HepG2 (cell line): ENCODE measurements at regions of chrX and their contacts with region 1.

Region 1: GRCh38 chrX:103686199-103687072 is at the start of gene MORF4L2:
- DNase-seq: peak; percentile 96
- ATAC-seq: peak; percentile 92
- H3K4me3 ChIP-seq: peak within 1 kb of the TSS; percentile 73 to 91 (median 78)
- H3K27ac ChIP-seq: peak within 1 kb of the TSS; percentile 99
- H3K4me1 ChIP-seq: peaks cover 39% of the 10 kb centered on the region
- H3K27me3 ChIP-seq: no peaks in the 10 kb centered on the region; a peak in 1 of 5 replicates
- CTCF ChIP-seq: no peak
- EP300 ChIP-seq: no peak; a peak in 1 of 4 replicates
- POLR2A ChIP-seq: peak; percentile 92 to 98
- RAD21 ChIP-seq: no peak
- total RNA-seq, gene MORF4L2: 469 and 687 TPM in 2 replicates

Region 2: GRCh38 chrX:103533511-103534216 is 152.8 kb before region 1 on chrX:
- CTCF ChIA-PET with region 1: no interaction called
- POLR2A ChIA-PET with region 1: no interaction called
- in situ Hi-C with region 1: no loop called
- intact Hi-C with region 1: loop called (anchors 5 kb)
- DNase-seq: peak; percentile 43
- ATAC-seq: peak; percentile 81
- H3K4me3 ChIP-seq: peak overlapping the region; percentile 2 to 65 (median 49); a peak in 5 of 6 replicates
- H3K27ac ChIP-seq: no peak overlapping the region
- H3K4me1 ChIP-seq: no peaks in the 10 kb centered on the region
- H3K27me3 ChIP-seq: no peaks in the 10 kb centered on the region
- CTCF ChIP-seq: peak; percentile 75
- EP300 ChIP-seq: no peak
- POLR2A ChIP-seq: no peak
- RAD21 ChIP-seq: 0 out of 2 replicates have a peak, but pooled peaks have one; percentile 18

Region 3: DNA sequence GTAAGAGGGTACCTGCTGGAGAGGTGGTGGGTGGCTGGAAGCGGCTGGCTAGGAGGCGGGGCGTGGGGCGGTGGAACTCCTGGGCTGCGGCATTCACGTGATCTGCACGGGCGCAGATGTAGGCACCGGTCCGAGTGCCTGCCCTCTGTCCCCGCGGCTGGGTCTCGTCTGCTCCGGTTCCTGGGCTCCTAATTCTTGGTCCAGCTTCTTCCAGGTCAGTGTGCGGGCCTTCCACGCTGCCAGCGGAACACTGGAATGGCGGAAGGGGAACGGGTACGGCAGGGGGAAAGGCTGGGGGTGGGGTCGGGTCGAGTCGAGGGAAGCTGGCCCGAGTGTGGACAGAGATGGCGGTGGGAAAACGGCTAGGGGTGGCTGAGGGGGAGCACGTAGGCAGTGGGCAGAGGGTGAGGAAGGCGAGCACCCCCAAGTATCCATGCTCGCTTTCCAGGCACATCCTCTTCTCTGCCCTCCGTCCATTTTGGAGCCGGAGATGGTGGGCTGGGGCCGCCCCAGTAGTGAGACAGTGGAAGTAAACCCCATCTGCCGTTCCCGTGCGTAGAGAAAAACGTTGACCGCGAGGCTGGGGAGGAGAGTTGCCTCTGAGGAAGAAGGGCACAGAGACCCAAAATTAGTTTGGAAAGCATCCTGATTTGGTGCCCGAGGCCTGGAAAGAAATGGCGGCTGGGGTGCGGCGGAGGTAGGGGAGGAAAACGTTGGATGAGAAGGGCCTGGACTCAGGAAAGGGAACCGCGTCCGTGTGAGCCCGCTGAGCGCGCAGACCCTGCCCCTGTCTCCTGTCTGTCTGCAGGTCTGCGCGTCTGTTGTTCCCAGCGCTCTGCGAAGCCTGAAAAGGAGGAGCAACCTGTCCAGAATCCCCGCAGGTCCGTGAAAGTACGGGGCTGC is 100.8 kb before region 1 on chrX and contains the start of gene TCEAL4:
- CTCF ChIA-PET with region 1: no interaction called
- POLR2A ChIA-PET with region 1: no interaction called
- in situ Hi-C with region 1: no loop called
- intact Hi-C with region 1: loop called (anchors 5 kb)
- DNase-seq: no peak
- ATAC-seq: peak; percentile 96
- H3K4me3 ChIP-seq: peak within 1 kb of the TSS; percentile 64 to 85 (median 81)
- H3K27ac ChIP-seq: peak within 1 kb of the TSS; percentile 43
- H3K4me1 ChIP-seq: 0 out of 2 replicates have a peak, but pooled peaks cover 7% of the 10 kb centered on the region
- H3K27me3 ChIP-seq: no peaks in the 10 kb centered on the region
- CTCF ChIP-seq: no peak
- EP300 ChIP-seq: no peak
- POLR2A ChIP-seq: peak; percentile 27 to 69; a peak in 2 of 4 replicates
- RAD21 ChIP-seq: no peak
- total RNA-seq, gene TCEAL4: 31.0 and 36.1 TPM in 2 replicates

Region 4: GRCh38 chrX:103629318-103630170 is 56.9 kb before region 1 on chrX:
- CTCF ChIA-PET with region 1: no interaction called
- POLR2A ChIA-PET with region 1: interaction called, 13 read pairs
- in situ Hi-C with region 1: no loop called
- intact Hi-C with region 1: loop called (anchors 5 kb)
- DNase-seq: peak; percentile 39
- ATAC-seq: peak; percentile 94
- H3K4me3 ChIP-seq: peak overlapping the region; percentile 67 to 78 (median 73)
- H3K27ac ChIP-seq: peak overlapping the region; percentile 86
- H3K4me1 ChIP-seq: peaks cover 7% of the 10 kb centered on the region; the same call in 1 of the 2 replicates
- H3K27me3 ChIP-seq: no peaks in the 10 kb centered on the region
- CTCF ChIP-seq: peak; percentile 67
- EP300 ChIP-seq: no peak
- POLR2A ChIP-seq: peak in 1 of 2 experiments; percentile 74; a peak in 2 of 4 replicates
- RAD21 ChIP-seq: no peak

Region 5: GRCh38 chrX:103806862-103807474 is 120.5 kb after region 1 on chrX:
- CTCF ChIA-PET with region 1: no interaction called
- POLR2A ChIA-PET with region 1: interaction called, 11 read pairs
- in situ Hi-C with region 1: loop called (anchors 5 kb)
- intact Hi-C with region 1: no loop called
- DNase-seq: peak; percentile 68
- ATAC-seq: peak; percentile 60; the same call in 2 of the 3 replicates
- H3K4me3 ChIP-seq: no peak overlapping the region
- H3K27ac ChIP-seq: no peak overlapping the region
- H3K4me1 ChIP-seq: peaks cover 24% of the 10 kb centered on the region
- H3K27me3 ChIP-seq: no peaks in the 10 kb centered on the region
- CTCF ChIP-seq: no peak
- EP300 ChIP-seq: peak in 1 of 2 experiments; percentile 21; a peak in 1 of 4 replicates
- POLR2A ChIP-seq: no peak
- RAD21 ChIP-seq: no peak

Region 6: DNA sequence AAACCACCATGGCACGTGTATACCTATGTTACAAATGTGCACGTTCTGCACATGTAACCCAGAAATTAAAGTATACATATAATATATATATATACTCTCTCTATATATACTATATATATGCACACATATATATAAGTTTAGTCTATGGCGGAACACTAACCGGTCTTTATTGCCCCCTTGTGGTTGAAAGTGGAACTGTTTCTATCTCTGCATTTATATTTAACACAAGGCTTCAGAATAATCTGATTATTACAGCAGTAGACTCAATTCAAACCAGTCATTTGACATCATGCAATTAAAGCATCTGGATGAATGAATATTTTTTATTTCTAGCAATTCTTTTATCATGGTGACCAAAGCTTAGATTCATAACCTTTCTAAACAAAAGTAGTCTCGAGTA is 131.1 kb after region 1 on chrX:
- CTCF ChIA-PET with region 1: interaction called, 20 read pairs
- POLR2A ChIA-PET with region 1: no interaction called
- in situ Hi-C with region 1: no loop called
- intact Hi-C with region 1: loop called (anchors 1 kb)
- DNase-seq: peak; percentile 10
- ATAC-seq: no peak
- H3K4me3 ChIP-seq: no peak overlapping the region
- H3K27ac ChIP-seq: no peak overlapping the region
- H3K4me1 ChIP-seq: no peaks in the 10 kb centered on the region
- H3K27me3 ChIP-seq: no peaks in the 10 kb centered on the region
- CTCF ChIP-seq: peak; percentile 42; the same call in 1 of the 2 replicates
- EP300 ChIP-seq: no peak
- POLR2A ChIP-seq: no peak
- RAD21 ChIP-seq: no peak

Region 7: DNA sequence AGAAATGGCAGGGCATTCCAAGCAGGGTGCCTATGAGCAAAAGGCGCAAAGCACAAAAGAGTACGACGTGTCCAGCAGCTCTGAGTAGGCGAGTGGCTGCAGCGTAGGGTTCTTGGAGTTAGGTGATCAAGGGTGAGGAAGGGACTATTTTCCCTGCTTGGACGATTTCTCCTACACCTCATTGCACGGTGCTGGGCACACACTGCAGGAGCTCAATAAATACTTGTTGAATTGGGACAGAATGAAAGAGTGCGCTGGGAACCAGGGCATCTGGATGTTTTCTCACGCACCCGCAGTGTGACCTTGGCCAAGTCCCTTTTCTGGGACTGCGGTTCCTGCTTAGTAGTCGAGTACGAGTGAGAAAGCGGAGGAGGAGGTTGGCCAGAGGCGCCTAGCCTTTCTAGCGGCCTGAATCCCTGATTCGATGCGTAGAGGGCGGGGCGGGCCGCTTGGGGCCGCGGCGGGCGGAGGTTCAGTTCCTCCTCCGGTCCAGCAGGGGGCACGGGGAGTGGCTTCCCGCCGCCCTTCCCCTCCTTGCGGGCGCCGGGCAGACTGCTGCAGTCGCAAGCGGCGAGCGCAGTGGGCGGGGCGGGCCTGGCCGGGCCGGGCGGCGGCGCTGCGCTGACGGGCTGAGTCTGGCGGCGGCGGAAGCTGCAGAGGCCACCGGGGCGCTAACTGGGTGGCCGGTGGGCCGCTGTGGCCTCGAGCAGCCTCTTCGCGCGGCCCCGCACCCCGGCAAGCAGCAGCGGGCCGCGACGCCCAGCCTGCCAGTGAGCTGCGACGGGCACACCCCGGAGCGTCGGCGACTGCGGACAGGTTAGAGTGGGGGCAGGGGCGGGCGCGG is 479.7 kb after region 1 on chrX and contains the start of gene FAM199X:
- CTCF ChIA-PET with region 1: no interaction called
- POLR2A ChIA-PET with region 1: no interaction called
- in situ Hi-C with region 1: loop called (anchors 25 kb)
- intact Hi-C with region 1: no loop called
- DNase-seq: peak; percentile 64
- ATAC-seq: peak; percentile 99
- H3K4me3 ChIP-seq: peak within 1 kb of the TSS; percentile 64 to 88 (median 84)
- H3K27ac ChIP-seq: peak within 1 kb of the TSS; percentile 75
- H3K4me1 ChIP-seq: peaks cover 26% of the 10 kb centered on the region
- H3K27me3 ChIP-seq: no peaks in the 10 kb centered on the region
- CTCF ChIP-seq: peak; percentile 78
- EP300 ChIP-seq: no peak
- POLR2A ChIP-seq: peak; percentile 58 to 60; a peak in 2 of 4 replicates
- RAD21 ChIP-seq: no peak
- total RNA-seq, gene FAM199X: 18.0 and 26.9 TPM in 2 replicates